Dorsolateral prefrontal cortex (tissue), 120 donors: ENCODE measurements at regions of chr16 and their contacts with region 1.

Region 1: DNA sequence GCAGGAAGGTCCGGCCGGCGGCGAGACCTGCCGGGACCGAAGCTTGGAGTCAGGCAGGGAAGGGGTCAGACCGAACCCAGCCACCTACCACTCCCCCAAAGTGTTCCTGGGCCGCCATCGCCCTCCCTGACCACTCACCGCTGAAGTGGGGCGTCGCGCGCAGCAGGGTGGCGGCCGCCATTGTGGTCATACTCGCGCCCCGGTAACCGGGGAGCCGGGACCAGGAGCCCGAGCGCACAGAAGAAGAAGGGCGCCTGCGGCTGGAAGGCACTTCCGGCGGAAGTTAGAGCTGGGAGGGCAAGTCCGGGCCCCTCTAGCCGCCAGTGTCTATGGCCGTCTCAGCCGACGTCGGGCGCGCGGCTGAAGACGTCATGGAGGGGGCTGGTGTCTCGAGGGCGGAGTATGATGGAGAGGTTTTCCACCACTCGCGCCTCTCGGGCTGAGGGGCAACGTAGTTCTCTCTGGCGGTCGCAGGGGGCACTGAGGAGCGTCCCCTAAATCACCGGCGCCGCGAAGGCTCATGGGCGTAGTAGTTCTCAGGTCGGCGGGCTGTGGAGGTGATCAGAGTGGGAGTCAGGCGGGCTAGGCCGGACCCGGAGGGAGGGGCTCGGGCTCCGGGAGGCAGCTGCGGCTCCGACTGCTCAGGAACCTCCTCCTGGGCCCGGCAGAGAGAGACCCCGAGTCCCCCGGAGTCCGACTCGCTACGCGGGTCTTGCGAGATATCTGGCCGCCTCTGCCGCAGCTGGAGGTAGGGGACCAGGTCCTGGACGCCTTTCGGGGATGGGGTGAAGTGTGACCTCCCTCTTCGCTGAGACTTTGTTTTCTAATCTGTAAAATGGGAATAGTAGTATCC is at the start of gene TUFM:
- DNase-seq: peak; percentile 98 to 99 (median 99)
- H3K4me3 ChIP-seq: peak within 1 kb of the TSS; percentile 78 to 100 (median 97)
- H3K27ac ChIP-seq: peak within 1 kb of the TSS; percentile 45 to 98 (median 89)
- H3K27me3 ChIP-seq: no peaks in the 10 kb centered on the region
- CTCF ChIP-seq: peak; percentile 19 to 86 (median 71)
- total RNA-seq, gene TUFM: 78.8 to 138 (median 104) TPM

Region 2: GRCh38 chr16:28823872-28824716 is 22.2 kb before region 1 on chr16:
- intact Hi-C with region 1: loop called (anchors 1 to 2 kb)
- DNase-seq: peak; percentile 81 to 98 (median 94)
- H3K4me3 ChIP-seq: peak overlapping the region; percentile 79 to 100 (median 97)
- H3K27ac ChIP-seq: peak overlapping the region; percentile 80 to 100 (median 98)
- H3K27me3 ChIP-seq: no peaks in the 10 kb centered on the region
- CTCF ChIP-seq: peak in 43 of 56 donors; percentile 12 to 63 (median 41)

Region 3: DNA sequence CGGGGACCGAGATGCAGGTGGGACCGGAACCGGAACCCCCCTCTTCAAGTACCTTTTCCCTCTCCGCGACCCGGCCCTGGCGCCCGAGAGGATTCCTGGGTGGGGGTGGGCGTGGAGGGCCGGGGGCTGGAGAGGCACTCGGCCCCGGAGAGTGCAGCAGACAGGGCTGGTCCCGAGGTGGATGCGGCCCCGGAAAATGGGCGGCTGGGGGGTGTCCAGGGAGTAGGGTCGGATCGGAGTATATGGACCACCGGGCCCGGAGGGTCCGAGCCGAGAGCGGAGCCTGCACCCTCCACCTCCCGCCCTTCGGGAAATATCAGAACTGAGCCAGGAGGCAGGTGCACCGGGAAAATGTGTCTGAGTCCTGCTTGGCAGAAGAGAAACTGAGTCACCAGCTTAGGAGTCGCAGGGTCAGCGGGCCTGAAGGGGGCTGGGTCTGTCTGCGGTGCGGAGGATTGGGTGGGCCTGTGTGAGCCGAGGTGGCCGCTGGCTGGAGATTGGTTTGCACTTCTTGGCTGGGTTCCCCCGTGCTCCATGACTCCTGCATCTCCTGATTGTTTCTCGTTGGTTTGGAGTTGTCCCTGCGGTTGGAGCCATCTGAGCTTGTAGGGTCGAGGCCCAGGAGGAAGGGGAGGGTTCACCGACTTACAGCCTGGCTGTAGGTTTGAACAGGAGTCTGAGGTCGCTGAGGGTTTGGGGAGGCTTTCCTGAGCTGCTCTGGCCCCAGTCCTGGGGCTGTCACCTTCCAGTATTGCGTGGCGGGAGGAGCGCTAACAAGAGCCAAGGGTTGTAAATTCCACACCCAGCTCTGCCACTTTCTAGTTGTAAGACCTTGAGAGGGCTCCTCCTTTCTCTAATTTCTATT is 17.9 kb after region 1 on chr16:
- intact Hi-C with region 1: loop called (anchors 1 kb)
- DNase-seq: peak in 1 of 10 donors; percentile 23
- H3K4me3 ChIP-seq: peak overlapping the region; percentile 66 to 98 (median 92)
- H3K27ac ChIP-seq: peak overlapping the region in 57 of 59 donors; percentile 72 to 99 (median 96)
- H3K27me3 ChIP-seq: no peaks in the 10 kb centered on the region
- CTCF ChIP-seq: no peak

Region 4: GRCh38 chr16:28924732-28925385 is 78.6 kb after region 1 on chr16 and contains the start of gene RABEP2:
- intact Hi-C with region 1: loop called in 1 of 2 experiments (anchors 5 kb)
- DNase-seq: peak; percentile 81 to 93 (median 88)
- H3K4me3 ChIP-seq: peak within 1 kb of the TSS; percentile 58 to 99 (median 89)
- H3K27ac ChIP-seq: peak within 1 kb of the TSS; percentile 74 to 98 (median 95)
- H3K27me3 ChIP-seq: no peaks in the 10 kb centered on the region
- CTCF ChIP-seq: peak in 5 of 56 donors; percentile 4 to 52 (median 22)
- total RNA-seq, gene RABEP2: 9.1 to 24.2 (median 15.8) TPM

Region 5: GRCh38 chr16:28943281-28943680 is 97.0 kb after region 1 on chr16:
- intact Hi-C with region 1: loop called in 1 of 2 experiments (anchors 5 kb)
- DNase-seq: no peak
- H3K4me3 ChIP-seq: no peak overlapping the region
- H3K27ac ChIP-seq: no peak overlapping the region
- H3K27me3 ChIP-seq: no peaks in the 10 kb centered on the region
- CTCF ChIP-seq: no peak

Region 6: GRCh38 chr16:28950648-28951409 is 104.5 kb after region 1 on chr16 and contains the start of gene NFATC2IP:
- intact Hi-C with region 1: loop called (anchors 5 kb)
- DNase-seq: peak; percentile 100
- H3K4me3 ChIP-seq: peak within 1 kb of the TSS; percentile 70 to 100 (median 96)
- H3K27ac ChIP-seq: peak within 1 kb of the TSS; percentile 1 to 93 (median 81)
- H3K27me3 ChIP-seq: no peaks in the 10 kb centered on the region
- CTCF ChIP-seq: peak in 17 of 56 donors; percentile 5 to 53 (median 22)
- total RNA-seq, gene NFATC2IP: 23.5 to 52.5 (median 35.3) TPM

Region 7: DNA sequence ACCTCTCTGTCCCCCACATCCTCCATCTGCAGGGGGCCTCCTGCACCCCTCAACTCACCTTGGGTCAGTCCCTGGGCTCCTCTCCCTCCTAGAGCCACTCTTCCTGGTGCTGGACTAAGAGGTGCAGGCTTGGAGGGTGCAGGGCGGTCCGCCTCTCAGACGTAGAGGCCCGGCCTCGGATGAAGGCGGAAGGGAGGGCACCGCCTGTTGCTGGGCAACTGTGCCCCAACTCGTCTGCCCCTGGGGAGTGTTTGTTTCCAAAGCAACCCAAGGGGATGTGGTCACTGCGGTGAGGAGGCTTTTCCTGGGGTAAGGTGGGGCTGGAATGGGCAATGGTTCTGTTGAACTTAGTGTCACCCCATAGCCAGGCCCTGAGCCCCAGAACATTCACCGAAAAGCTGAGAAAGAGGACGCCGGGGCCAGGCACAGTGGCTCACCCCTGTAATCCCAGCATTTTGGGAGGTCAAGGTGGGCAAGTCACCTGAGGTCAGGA is 899.6 kb after region 1 on chr16 and contains the start of gene C16orf54:
- intact Hi-C with region 1: no loop called
- DNase-seq: peak in 4 of 10 donors; percentile 30 to 54 (median 50)
- H3K4me3 ChIP-seq: peak within 1 kb of the TSS in 31 of 59 donors; percentile 2 to 52 (median 27)
- H3K27ac ChIP-seq: no peak within 1 kb of the TSS
- H3K27me3 ChIP-seq: no peaks in the 10 kb centered on the region
- CTCF ChIP-seq: no peak
- total RNA-seq, gene C16orf54: 0.17 to 1.3 (median 0.45) TPM in 108 of 120 experiments, not detected in the others